ENCODE measurements at regions of chr9 and their contacts with region 1.

Region 1: DNA sequence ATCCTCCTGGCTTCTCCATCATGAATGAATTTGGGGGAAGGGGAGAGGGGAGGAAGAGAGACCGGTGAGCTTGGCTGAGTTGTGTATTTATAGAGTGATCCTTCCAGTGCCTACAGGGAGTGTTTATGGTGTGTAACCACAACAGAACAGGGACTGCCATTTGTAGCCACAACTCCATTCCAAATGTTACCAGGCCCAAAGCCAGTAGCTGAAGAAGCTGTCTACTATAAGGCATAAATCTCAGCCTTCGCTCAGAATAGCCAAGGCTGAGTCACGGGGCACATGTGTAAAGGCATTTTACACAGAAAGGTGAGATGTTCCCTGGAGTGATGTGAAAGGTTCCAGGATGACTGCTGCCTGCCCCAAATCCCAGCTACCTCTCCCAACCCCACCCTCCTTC is 2.5 kb downstream of the TMEM252 start:
- DNase-seq: no peak
- H3K4me3 ChIP-seq: no peak overlapping the region
- H3K27ac ChIP-seq: no peak overlapping the region
- H3K4me1 ChIP-seq: no peaks in the 10 kb centered on the region
- H3K27me3 ChIP-seq: peaks cover 0 to 3% (median 2%) of the 10 kb centered on the region in 4 experiments; a peak in 3 of 7 replicates
- CTCF ChIP-seq: no peak
- EP300 ChIP-seq: no peak
- POLR2A ChIP-seq: no peak
- RAD21 ChIP-seq: no peak

Region 2: GRCh38 chr9:68560071-68560844 is 22.1 kb after region 1 on chr9:
- CTCF ChIA-PET with region 1: interaction called, 22 read pairs
- POLR2A ChIA-PET with region 1: no interaction called
- DNase-seq: peak; percentile 54 to 91
- H3K4me3 ChIP-seq: no peak overlapping the region
- H3K27ac ChIP-seq: no peak overlapping the region
- H3K4me1 ChIP-seq: peaks cover 2 to 19% (median 8%) of the 10 kb centered on the region in 4 experiments; a peak in 6 of 7 replicates
- H3K27me3 ChIP-seq: peaks cover 0 to 9% (median 0%) of the 10 kb centered on the region in 4 experiments; a peak in 2 of 7 replicates
- CTCF ChIP-seq: peak; percentile 79 to 89 (median 89)
- EP300 ChIP-seq: no peak
- POLR2A ChIP-seq: no peak
- RAD21 ChIP-seq: peak; percentile 50 to 67; a peak in 3 of 4 replicates